PC-3 (cell line): ENCODE measurements at regions of chr7 and their contacts with region 1.

Region 1: DNA sequence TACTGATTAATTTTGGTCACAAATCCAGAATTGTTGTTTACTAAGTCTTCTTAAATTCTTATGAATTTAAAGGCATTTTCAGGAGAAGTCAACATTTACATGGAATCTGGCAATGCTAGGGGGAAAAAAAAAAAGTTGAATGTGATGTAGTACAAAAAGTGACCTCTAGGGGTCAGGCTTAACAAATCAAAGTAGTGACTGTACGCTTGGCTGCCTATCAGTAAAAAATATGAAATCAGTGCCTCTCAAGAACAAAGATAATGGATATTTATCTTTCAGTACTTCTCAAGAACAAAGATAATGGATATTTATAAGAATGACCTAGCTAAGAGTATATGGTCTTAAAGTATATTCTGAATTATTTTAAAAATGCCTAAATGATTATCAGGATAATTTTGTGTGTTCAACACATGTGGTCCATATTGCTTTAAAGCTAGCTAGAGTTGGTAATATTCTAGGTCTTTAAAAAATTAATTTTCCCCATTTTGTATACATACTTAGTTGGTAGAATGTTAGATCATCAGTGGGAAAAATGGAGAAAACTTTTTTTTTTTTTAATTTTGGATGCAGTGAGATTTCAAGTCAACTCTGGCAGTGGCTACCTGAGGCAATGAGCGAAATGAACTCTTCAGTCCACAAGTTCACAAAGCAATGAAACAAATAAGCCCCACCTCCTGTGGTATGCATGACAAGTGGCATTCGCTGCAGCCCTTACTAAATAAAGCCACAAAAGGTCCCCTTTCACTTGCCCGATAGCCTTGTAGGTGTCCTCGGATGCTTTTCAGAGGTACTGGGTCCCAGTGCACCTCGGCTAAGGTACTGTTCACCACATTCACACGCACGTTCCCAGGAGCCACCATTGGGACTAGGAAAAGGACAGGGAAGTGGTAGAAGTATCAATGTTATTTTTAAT is 51.2 kb upstream of the LAMB4 start:
- DNase-seq: peak; percentile 80
- ATAC-seq: peak; percentile 43
- H3K4me3 ChIP-seq: no peak overlapping the region
- H3K27ac ChIP-seq: no peak overlapping the region
- H3K4me1 ChIP-seq: no peaks in the 10 kb centered on the region
- H3K27me3 ChIP-seq: 0 out of 2 replicates have a peak, but pooled peaks cover 5% of the 10 kb centered on the region
- CTCF ChIP-seq: peak; percentile 81

Region 2: GRCh38 chr7:107291438-107291837 is 889.9 kb before region 1 on chr7:
- CTCF ChIA-PET with region 1: no interaction called
- POLR2A ChIA-PET with region 1: no interaction called
- intact Hi-C with region 1: no loop called
- DNase-seq: peak; percentile 14
- ATAC-seq: no peak
- H3K4me3 ChIP-seq: no peak overlapping the region
- H3K27ac ChIP-seq: no peak overlapping the region
- H3K4me1 ChIP-seq: no peaks in the 10 kb centered on the region
- H3K27me3 ChIP-seq: no peaks in the 10 kb centered on the region
- CTCF ChIP-seq: no peak

Region 3: GRCh38 chr7:108235451-108236061 is 54.2 kb after region 1 on chr7:
- CTCF ChIA-PET with region 1: no interaction called
- POLR2A ChIA-PET with region 1: no interaction called
- intact Hi-C with region 1: no loop called
- DNase-seq: no peak
- ATAC-seq: no peak
- H3K4me3 ChIP-seq: no peak overlapping the region
- H3K27ac ChIP-seq: no peak overlapping the region
- H3K4me1 ChIP-seq: no peaks in the 10 kb centered on the region
- H3K27me3 ChIP-seq: no peaks in the 10 kb centered on the region
- CTCF ChIP-seq: no peak

Region 4: GRCh38 chr7:108459931-108460551 is 278.7 kb after region 1 on chr7:
- CTCF ChIA-PET with region 1: no interaction called
- POLR2A ChIA-PET with region 1: no interaction called
- intact Hi-C with region 1: loop called (anchors 1 kb)
- DNase-seq: peak; percentile 55
- ATAC-seq: peak; percentile 80
- H3K4me3 ChIP-seq: no peak overlapping the region
- H3K27ac ChIP-seq: no peak overlapping the region
- H3K4me1 ChIP-seq: no peaks in the 10 kb centered on the region
- H3K27me3 ChIP-seq: peaks cover 45% of the 10 kb centered on the region
- CTCF ChIP-seq: peak; percentile 66

Region 5: DNA sequence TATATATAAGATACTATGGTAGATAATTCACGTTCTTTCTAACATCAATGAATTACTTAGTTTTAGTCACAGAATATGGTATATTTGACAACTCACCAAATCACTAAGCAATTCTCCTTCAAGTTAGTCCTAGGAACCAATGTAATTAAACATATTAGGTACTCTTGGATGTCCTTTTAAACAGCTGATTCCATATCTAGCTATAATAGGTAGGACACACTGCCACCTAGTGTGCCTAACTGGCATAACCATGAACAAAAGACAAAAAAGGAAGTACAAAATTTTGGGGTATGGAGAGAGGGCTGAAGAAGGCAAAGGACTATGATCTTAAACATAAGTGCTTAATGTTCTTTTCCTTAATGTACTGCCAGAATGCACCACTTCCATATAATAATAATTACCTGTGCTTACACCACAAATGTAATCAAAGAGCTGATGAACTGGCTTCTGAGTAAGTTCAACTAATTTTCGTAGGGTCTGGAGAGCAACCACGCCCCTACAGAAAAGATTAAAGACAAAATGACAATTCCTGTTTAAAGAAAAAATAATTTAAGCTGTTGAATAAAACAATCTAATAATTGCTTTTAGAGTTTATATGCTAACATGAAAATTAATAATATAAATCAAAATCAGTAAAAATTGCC is 315.9 kb after region 1 on chr7:
- CTCF ChIA-PET with region 1: interaction called, 4 read pairs
- POLR2A ChIA-PET with region 1: no interaction called
- intact Hi-C with region 1: loop called (anchors 1 kb)
- DNase-seq: peak; percentile 74
- ATAC-seq: peak; percentile 60
- H3K4me3 ChIP-seq: no peak overlapping the region
- H3K27ac ChIP-seq: no peak overlapping the region
- H3K4me1 ChIP-seq: peaks cover 4% of the 10 kb centered on the region; the same call in 1 of the 2 replicates
- H3K27me3 ChIP-seq: no peaks in the 10 kb centered on the region
- CTCF ChIP-seq: peak; percentile 84